ENCODE measurements at regions of chr16 and their contacts with region 1.

Region 1: GRCh38 chr16:87702325-87702811 is 63.4 kb downstream of the KLHDC4 start:
- DNase-seq: peak; percentile 84
- H3K4me3 ChIP-seq: no peak overlapping the region
- H3K27ac ChIP-seq: peak overlapping the region; percentile 3
- H3K4me1 ChIP-seq: peaks cover 24% of the 10 kb centered on the region
- H3K27me3 ChIP-seq: no peaks in the 10 kb centered on the region
- CTCF ChIP-seq: peak; percentile 73 to 84
- POLR2A ChIP-seq: no peak

Region 2: GRCh38 chr16:87278191-87279095 is 423.9 kb before region 1 on chr16:
- CTCF ChIA-PET with region 1: no interaction called
- POLR2A ChIA-PET with region 1: no interaction called
- dilution Hi-C with region 1: no loop called
- intact Hi-C with region 1: no loop called
- DNase-seq: peak; percentile 86
- H3K4me3 ChIP-seq: no peak overlapping the region
- H3K27ac ChIP-seq: no peak overlapping the region
- H3K4me1 ChIP-seq: peaks cover 4% of the 10 kb centered on the region
- H3K27me3 ChIP-seq: no peaks in the 10 kb centered on the region
- CTCF ChIP-seq: peak; percentile 92 to 94
- POLR2A ChIP-seq: no peak

Region 3: DNA sequence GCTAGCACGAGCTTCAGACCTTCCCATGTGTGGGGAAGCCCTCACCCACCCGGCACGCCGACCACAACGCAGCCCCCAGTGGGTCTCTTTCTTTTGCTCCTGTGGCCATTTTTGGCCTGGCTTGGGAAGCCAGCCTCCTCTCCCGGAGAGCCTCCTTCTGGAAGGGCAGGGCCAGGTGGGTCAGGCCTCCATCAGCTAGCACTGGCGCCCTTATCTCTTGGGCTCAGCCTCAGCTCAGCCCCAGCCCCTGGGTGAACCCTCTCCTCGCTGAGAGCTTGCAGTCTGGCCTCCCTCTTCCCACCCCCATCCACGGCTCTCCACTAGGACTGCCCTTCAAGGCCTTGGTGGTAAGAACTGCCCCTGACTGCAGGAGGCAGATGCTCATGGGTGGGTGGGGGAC is 114.7 kb before region 1 on chr16:
- CTCF ChIA-PET with region 1: interaction called, 6 read pairs
- POLR2A ChIA-PET with region 1: no interaction called
- dilution Hi-C with region 1: no loop called
- intact Hi-C with region 1: loop called (anchors 1 kb)
- DNase-seq: no peak
- H3K4me3 ChIP-seq: no peak overlapping the region
- H3K27ac ChIP-seq: no peak overlapping the region
- H3K4me1 ChIP-seq: peaks cover 14% of the 10 kb centered on the region
- H3K27me3 ChIP-seq: peaks cover 2 to 3% of the 10 kb centered on the region in 2 experiments
- CTCF ChIP-seq: no peak
- POLR2A ChIP-seq: no peak

Region 4: DNA sequence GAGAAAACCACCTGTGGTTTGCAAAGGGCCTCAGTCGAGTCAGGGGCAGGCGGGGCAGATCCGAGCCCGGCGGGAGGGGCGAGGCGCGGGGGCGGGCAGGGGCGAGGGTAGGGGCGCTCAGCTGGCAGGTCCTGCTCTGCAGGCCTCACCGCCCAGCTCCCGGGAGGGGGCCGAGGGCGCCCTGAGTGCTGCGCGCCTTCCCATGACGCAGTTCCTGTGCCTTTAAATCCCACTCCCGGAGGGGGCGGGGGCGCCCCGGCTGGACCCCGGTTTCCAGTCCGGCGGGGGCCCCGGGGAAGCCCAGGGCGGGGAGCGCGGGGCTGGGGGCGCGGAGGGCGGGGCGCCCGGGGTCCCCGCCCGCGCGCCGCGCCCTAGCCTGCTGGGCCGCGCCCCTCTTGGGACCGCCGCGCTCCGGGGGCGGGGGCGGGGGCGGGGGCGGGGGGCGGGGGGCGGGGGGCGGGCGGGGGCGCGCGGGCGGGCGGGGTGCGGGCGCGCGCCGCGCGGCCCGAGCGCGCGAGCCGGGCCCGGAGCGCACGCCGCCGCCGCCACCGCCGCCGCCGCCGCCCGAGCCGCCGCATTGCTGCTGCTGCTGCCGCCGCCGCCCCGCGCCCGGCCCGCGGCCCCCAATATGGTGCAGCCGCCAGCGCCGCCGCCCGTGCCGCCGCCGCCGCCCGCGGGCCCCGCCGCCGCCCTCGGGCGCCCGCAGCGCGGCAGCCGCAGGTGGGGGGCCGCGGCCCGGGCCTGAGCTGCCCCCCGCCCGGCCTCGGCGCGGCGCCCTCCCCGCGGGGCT is 100.2 kb before region 1 on chr16 and contains the start of gene JPH3:
- CTCF ChIA-PET with region 1: no interaction called
- POLR2A ChIA-PET with region 1: no interaction called
- dilution Hi-C with region 1: no loop called
- intact Hi-C with region 1: no loop called
- DNase-seq: no peak
- H3K4me3 ChIP-seq: peak within 1 kb of the TSS in 1 of 3 experiments; percentile 10
- H3K27ac ChIP-seq: no peak within 1 kb of the TSS
- H3K4me1 ChIP-seq: no peaks in the 10 kb centered on the region
- H3K27me3 ChIP-seq: peaks cover 50 to 51% of the 10 kb centered on the region in 2 experiments
- CTCF ChIP-seq: no peak
- POLR2A ChIP-seq: no peak
- total RNA-seq, gene JPH3: 0.09 and 0.22 TPM in 2 replicates

Region 5: GRCh38 chr16:87678618-87679017 is 23.8 kb before region 1 on chr16:
- CTCF ChIA-PET with region 1: interaction called, 11 read pairs
- POLR2A ChIA-PET with region 1: no interaction called
- dilution Hi-C with region 1: no loop called
- intact Hi-C with region 1: no loop called
- DNase-seq: peak; percentile 19
- H3K4me3 ChIP-seq: no peak overlapping the region
- H3K27ac ChIP-seq: no peak overlapping the region
- H3K4me1 ChIP-seq: peaks cover 3% of the 10 kb centered on the region
- H3K27me3 ChIP-seq: no peaks in the 10 kb centered on the region
- CTCF ChIP-seq: peak in 1 of 2 donors; percentile 38
- POLR2A ChIP-seq: no peak

Region 6: GRCh38 chr16:87723226-87723623 is 20.9 kb after region 1 on chr16:
- CTCF ChIA-PET with region 1: interaction called, 15 read pairs
- POLR2A ChIA-PET with region 1: no interaction called
- dilution Hi-C with region 1: no loop called
- intact Hi-C with region 1: no loop called
- DNase-seq: peak; percentile 88
- H3K4me3 ChIP-seq: no peak overlapping the region
- H3K27ac ChIP-seq: no peak overlapping the region
- H3K4me1 ChIP-seq: peaks cover 6% of the 10 kb centered on the region
- H3K27me3 ChIP-seq: no peaks in the 10 kb centered on the region
- CTCF ChIP-seq: no peak
- POLR2A ChIP-seq: no peak

Region 7: DNA sequence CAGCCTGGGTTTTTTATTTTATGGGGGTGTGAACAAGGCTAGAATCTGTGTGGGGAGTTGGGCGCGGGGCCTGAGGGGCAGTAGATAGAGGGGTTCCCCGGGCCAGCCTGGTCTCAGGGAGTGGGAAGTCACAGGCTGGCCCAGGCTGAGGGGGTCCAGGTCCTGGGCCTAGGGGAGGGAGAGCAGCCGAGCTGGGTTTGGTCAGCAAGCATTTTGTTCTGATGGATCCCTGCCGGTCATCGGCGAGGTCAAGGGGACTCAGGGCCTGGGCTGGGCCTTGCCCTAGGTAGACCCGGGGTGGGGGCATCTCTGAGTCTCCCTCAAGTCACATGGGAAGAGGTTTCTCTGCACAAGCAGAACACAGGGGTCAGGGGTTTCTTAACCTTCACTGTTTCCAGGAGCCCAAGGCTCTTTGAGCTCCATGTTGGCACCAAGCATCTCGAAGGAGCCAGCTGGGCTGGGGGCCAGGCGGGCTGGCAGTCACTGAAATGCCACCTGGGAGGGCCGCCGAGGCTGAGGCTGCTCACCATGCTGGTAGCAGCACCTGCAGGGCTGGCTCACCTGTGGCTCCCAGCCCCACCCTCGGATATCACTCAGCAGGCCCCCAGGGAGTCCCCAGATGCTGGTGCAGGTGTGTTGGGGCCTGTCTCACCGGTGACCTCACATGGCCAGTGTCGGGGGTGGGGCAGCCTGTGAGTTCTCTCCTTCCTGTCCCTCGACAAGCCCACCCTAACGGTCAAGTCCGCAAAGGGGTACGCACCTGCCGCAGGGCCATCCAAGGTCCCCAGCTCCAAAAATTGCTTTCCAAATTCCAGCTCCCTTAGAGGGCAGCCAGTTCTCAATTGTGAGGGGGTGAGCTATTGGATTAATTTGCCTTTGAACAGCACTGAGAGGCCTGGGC is 126.0 kb after region 1 on chr16:
- CTCF ChIA-PET with region 1: no interaction called
- POLR2A ChIA-PET with region 1: no interaction called
- dilution Hi-C with region 1: no loop called
- intact Hi-C with region 1: no loop called
- DNase-seq: no peak
- H3K4me3 ChIP-seq: no peak overlapping the region
- H3K27ac ChIP-seq: no peak overlapping the region
- H3K4me1 ChIP-seq: no peaks in the 10 kb centered on the region
- H3K27me3 ChIP-seq: peaks cover 0 to 2% of the 10 kb centered on the region in 2 experiments
- CTCF ChIP-seq: no peak
- POLR2A ChIP-seq: no peak